HCT116 (cell line): ENCODE measurements at regions of chr2 and their contacts with region 1.

Region 1: GRCh38 chr2:35871672-35872071 is 483.9 kb upstream of the CRIM1 start:
- DNase-seq: peak; percentile 1
- ATAC-seq: peak; percentile 63
- H3K4me3 ChIP-seq: no peak overlapping the region
- H3K27ac ChIP-seq: no peak overlapping the region
- H3K4me1 ChIP-seq: no peaks in the 10 kb centered on the region
- H3K27me3 ChIP-seq: no peaks in the 10 kb centered on the region
- CTCF ChIP-seq: peak; percentile 9 to 44 (median 33); a peak in 4 of 6 replicates
- POLR2A ChIP-seq: no peak
- RAD21 ChIP-seq: peak; percentile 38; the same call in 1 of the 2 replicates

Region 2: GRCh38 chr2:36329746-36330472 is 458.2 kb after region 1 on chr2:
- CTCF ChIA-PET with region 1: no interaction called
- POLR2A ChIA-PET with region 1: no interaction called
- RAD21 ChIA-PET with region 1: no interaction called
- intact Hi-C with region 1: loop called (anchors 10 kb)
- DNase-seq: no peak
- ATAC-seq: no peak
- H3K4me3 ChIP-seq: no peak overlapping the region
- H3K27ac ChIP-seq: no peak overlapping the region
- H3K4me1 ChIP-seq: no peaks in the 10 kb centered on the region
- H3K27me3 ChIP-seq: no peaks in the 10 kb centered on the region
- CTCF ChIP-seq: no peak
- POLR2A ChIP-seq: no peak
- RAD21 ChIP-seq: no peak